ENCODE measurements at regions of chr2 and their contacts with region 1.

Region 1: GRCh38 chr2:58046585-58047372 is at the start of gene VRK2:
- DNase-seq: peak; percentile 91
- ATAC-seq: peak; percentile 89
- H3K4me3 Mint-ChIP-seq: peak within 1 kb of the TSS; percentile 87
- H3K27ac Mint-ChIP-seq: peak within 1 kb of the TSS; percentile 94
- H3K4me1 Mint-ChIP-seq: peaks cover 44% of the 10 kb centered on the region
- H3K27me3 Mint-ChIP-seq: no peaks in the 10 kb centered on the region
- total RNA-seq, gene VRK2: 22.1 to 28.4 TPM

Region 2: GRCh38 chr2:58089081-58089480 is 42.3 kb after region 1 on chr2:
- CTCF ChIA-PET with region 1: no interaction called
- POLR2A ChIA-PET with region 1: no interaction called
- intact Hi-C with region 1: no loop called
- DNase-seq: no peak
- ATAC-seq: no peak
- H3K4me3 Mint-ChIP-seq: no peak overlapping the region
- H3K27ac Mint-ChIP-seq: no peak overlapping the region
- H3K4me1 Mint-ChIP-seq: peaks cover 7% of the 10 kb centered on the region
- H3K27me3 Mint-ChIP-seq: no peaks in the 10 kb centered on the region

Region 3: GRCh38 chr2:58107803-58108710 is 61.3 kb after region 1 on chr2:
- CTCF ChIA-PET with region 1: no interaction called
- POLR2A ChIA-PET with region 1: no interaction called
- intact Hi-C with region 1: loop called in 1 of 2 experiments (anchors 1 kb)
- DNase-seq: no peak
- ATAC-seq: peak; percentile 95
- H3K4me3 Mint-ChIP-seq: no peak overlapping the region
- H3K27ac Mint-ChIP-seq: peak overlapping the region; percentile 45
- H3K4me1 Mint-ChIP-seq: peaks cover 18% of the 10 kb centered on the region
- H3K27me3 Mint-ChIP-seq: no peaks in the 10 kb centered on the region

Region 4: DNA sequence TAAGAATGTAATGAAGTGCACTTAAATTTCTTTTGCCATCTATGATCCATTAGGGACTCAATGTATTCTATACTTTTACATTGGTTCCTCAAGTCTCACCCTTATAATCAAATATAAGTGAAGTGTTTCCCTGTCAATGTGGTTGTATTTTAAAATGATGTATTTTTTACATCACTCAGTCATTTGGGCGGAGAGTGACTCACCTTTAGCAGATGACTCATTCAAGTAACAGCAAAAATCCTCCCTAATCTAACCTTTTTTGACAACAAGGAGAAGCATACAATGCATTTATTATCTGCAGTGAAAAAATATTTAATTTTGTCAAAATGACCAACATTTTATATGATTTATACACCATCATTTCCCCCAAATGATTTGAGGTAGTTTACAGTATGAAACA is 99.9 kb after region 1 on chr2:
- CTCF ChIA-PET with region 1: no interaction called
- POLR2A ChIA-PET with region 1: no interaction called
- intact Hi-C with region 1: loop called in 1 of 2 experiments (anchors 5 kb)
- DNase-seq: peak; percentile 33
- ATAC-seq: peak; percentile 80
- H3K4me3 Mint-ChIP-seq: no peak overlapping the region
- H3K27ac Mint-ChIP-seq: no peak overlapping the region
- H3K4me1 Mint-ChIP-seq: peaks cover 12% of the 10 kb centered on the region
- H3K27me3 Mint-ChIP-seq: no peaks in the 10 kb centered on the region

Measured in activated CD4-positive, alpha-beta T cell treated with anti-CD3 and anti-CD28 coated beads for 36 hours (primary cell).